Dorsolateral prefrontal cortex (tissue), 120 donors: ENCODE measurements at regions of chr18 and their contacts with region 1.

Region 1: GRCh38 chr18:45379903-45380302 is 235.4 kb upstream of the SLC14A2 start:
- DNase-seq: no peak
- H3K4me3 ChIP-seq: no peak overlapping the region
- H3K27ac ChIP-seq: no peak overlapping the region
- H3K27me3 ChIP-seq: peaks cover 0 to 4% (median 0%) of the 10 kb centered on the region in 45 donors
- CTCF ChIP-seq: no peak

Region 2: GRCh38 chr18:44673256-44673880 is 706.5 kb before region 1 on chr18:
- intact Hi-C with region 1: loop called in 1 of 2 experiments (anchors 5 kb)
- DNase-seq: no peak
- H3K4me3 ChIP-seq: no peak overlapping the region
- H3K27ac ChIP-seq: no peak overlapping the region
- H3K27me3 ChIP-seq: peaks cover 0 to 7% (median 0%) of the 10 kb centered on the region in 45 donors
- CTCF ChIP-seq: no peak

Region 3: DNA sequence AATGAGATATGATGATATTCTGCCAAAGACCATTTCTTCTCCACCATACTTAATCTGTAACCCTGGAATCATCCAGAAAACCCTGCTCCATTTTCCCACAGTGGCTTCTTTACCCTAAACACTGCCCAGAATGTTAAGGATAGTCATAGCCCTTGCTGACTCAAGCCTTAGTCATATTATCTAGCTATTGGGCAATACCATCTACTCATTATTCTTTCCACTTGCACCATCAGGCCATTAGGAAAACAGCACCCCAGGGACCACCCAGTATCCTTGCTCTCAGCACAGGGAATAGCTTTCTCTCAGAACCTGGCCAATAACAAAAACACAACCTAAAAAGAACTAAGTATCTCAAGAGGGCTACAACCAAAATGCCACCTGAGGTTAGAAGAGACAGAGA is 210.3 kb before region 1 on chr18:
- intact Hi-C with region 1: no loop called
- DNase-seq: no peak
- H3K4me3 ChIP-seq: no peak overlapping the region
- H3K27ac ChIP-seq: no peak overlapping the region
- H3K27me3 ChIP-seq: no peaks in the 10 kb centered on the region
- CTCF ChIP-seq: no peak

Region 4: DNA sequence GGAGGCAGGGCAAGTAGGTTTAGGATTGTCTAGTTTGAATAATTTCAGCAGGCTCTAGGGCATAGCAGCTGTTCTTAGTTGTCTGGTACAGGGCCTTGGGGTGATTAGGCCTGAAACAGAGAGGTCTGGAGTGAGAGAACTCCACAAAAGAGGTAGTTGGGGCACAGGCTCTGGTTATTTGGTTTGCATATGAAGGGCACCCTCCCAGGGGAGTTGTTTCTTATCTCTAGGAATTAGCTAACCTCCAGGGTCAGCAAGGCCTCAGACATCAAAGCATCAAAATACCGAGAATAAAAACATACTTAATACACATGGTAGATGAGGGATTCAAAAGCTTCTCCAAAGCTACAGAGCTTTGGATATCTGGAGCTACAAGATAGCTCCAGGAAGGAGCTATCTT is 197.0 kb after region 1 on chr18:
- intact Hi-C with region 1: no loop called
- DNase-seq: no peak
- H3K4me3 ChIP-seq: no peak overlapping the region
- H3K27ac ChIP-seq: no peak overlapping the region
- H3K27me3 ChIP-seq: peaks cover 0 to 2% (median 0%) of the 10 kb centered on the region in 45 donors
- CTCF ChIP-seq: no peak